ENCODE measurements at regions of chr11 and their contacts with region 1.

Region 1: GRCh38 chr11:46121724-46122477 is 647 bp upstream of the PHF21A start:
- DNase-seq: peak; percentile 80 to 87 (median 83)
- ATAC-seq: peak in 3 of 4 donors; percentile 4 to 51 (median 42)
- H3K4me3 ChIP-seq: peak overlapping the region; percentile 50 to 92 (median 74)
- H3K27ac ChIP-seq: peak overlapping the region; percentile 43 to 98 (median 92)
- H3K4me1 ChIP-seq: peaks cover 0 to 35% (median 24%) of the 10 kb centered on the region in 12 donors
- H3K27me3 ChIP-seq: no peaks in the 10 kb centered on the region
- CTCF ChIP-seq: no peak
- POLR2A ChIP-seq: no peak

Region 2: DNA sequence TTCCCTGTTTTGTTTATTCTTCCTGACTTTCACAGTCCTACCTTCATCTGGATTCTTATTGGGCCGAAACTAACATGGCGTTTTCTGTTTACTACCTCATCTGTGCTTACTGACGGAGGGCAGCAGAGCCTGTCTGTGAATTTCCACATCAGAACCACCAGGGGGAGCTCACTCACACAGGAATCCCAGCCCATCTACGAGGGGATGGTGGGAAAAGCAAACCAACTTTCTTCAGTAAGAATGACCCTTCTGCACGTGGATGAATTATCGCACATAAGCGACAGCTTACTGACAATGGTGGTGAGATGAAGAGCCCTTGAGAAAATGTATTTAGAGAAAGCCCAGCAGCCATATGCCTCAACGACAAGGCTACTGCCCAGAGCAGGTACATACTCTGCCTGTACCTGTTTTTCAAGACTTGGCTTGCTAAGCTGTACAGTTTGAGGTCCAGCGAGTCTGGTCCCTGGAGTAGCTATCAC is 157.0 kb before region 1 on chr11:
- intact Hi-C with region 1: loop called in 1 of 10 experiments (anchors 5 kb)
- DNase-seq: peak in 4 of 5 donors; percentile 35 to 63 (median 52)
- ATAC-seq: peak; percentile 68 to 93 (median 88)
- H3K4me3 ChIP-seq: no peak overlapping the region
- H3K27ac ChIP-seq: peak overlapping the region in 2 of 12 donors; percentile 13
- H3K4me1 ChIP-seq: peaks cover 0 to 18% (median 4%) of the 10 kb centered on the region in 12 donors
- H3K27me3 ChIP-seq: no peaks in the 10 kb centered on the region
- CTCF ChIP-seq: peak; percentile 86 to 97 (median 89)
- POLR2A ChIP-seq: no peak

Region 3: DNA sequence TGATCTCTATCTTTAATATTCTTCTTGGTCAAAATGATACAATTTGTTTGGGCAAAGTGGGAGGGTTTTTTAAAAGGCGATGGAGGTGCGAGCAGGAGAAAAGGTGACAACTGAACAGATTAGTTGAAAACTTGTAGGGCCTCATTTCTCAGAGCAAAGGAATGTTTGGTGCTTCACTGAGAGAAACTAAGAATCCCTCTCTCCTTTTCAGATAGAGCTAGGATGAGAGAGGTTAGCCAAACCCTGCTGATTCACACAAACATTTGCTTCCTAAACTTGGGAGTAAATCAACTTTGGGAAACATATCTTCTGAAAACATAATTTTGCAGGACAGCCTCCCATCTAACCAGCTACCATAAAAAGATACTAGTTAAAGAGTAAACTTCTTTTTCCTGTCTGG is 57.7 kb before region 1 on chr11:
- intact Hi-C with region 1: loop called in 1 of 10 experiments (anchors 10 kb)
- DNase-seq: no peak
- ATAC-seq: no peak
- H3K4me3 ChIP-seq: no peak overlapping the region
- H3K27ac ChIP-seq: no peak overlapping the region
- H3K4me1 ChIP-seq: peaks cover 0 to 17% (median 1%) of the 10 kb centered on the region in 12 donors
- H3K27me3 ChIP-seq: no peaks in the 10 kb centered on the region
- CTCF ChIP-seq: no peak
- POLR2A ChIP-seq: no peak

Region 4: GRCh38 chr11:46308631-46309419 is 186.9 kb after region 1 on chr11:
- intact Hi-C with region 1: loop called in 2 of 10 experiments (anchors 5 to 10 kb)
- DNase-seq: peak; percentile 71 to 85 (median 79)
- ATAC-seq: peak; percentile 61 to 89 (median 82)
- H3K4me3 ChIP-seq: no peak overlapping the region
- H3K27ac ChIP-seq: no peak overlapping the region
- H3K4me1 ChIP-seq: peaks cover 0 to 9% (median 0%) of the 10 kb centered on the region in 12 donors
- H3K27me3 ChIP-seq: no peaks in the 10 kb centered on the region
- CTCF ChIP-seq: peak; percentile 81 to 95 (median 88)
- POLR2A ChIP-seq: no peak